ENCODE measurements at regions of chr9 and their contacts with region 1.

Region 1: GRCh38 chr9:77020438-77021290 is 1.2 kb downstream of the FOXB2 start:
- DNase-seq: no peak
- ATAC-seq: no peak
- H3K4me3 ChIP-seq: no peak overlapping the region
- H3K27ac ChIP-seq: no peak overlapping the region
- H3K4me1 ChIP-seq: no peaks in the 10 kb centered on the region
- H3K27me3 ChIP-seq: no peaks in the 10 kb centered on the region; the same call in 1 of the 2 replicates
- CTCF ChIP-seq: no peak

Region 2: DNA sequence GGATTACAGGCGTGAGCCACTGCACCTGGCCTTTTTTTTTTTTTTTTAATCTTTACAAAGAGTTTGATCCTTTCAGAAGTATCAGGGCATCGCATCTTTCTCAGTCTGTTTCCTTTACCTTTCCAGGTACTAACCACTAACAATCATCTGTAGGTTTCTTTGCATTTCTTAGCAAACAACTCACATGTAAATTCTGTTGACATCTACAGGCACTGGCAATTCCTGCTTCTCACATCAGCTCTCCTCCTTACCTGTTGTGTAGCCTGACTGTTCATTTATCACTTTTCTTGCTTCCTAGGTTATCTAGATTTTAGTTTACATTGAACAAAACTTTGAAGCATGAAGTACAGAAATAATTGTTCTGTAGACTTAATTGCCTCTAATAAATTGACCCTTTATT is 129.2 kb after region 1 on chr9:
- CTCF ChIA-PET with region 1: interaction called, 4 read pairs
- POLR2A ChIA-PET with region 1: no interaction called
- in situ Hi-C with region 1: no loop called
- intact Hi-C with region 1: loop called (anchors 5 kb)
- DNase-seq: no peak
- ATAC-seq: no peak
- H3K4me3 ChIP-seq: no peak overlapping the region
- H3K27ac ChIP-seq: no peak overlapping the region
- H3K4me1 ChIP-seq: no peaks in the 10 kb centered on the region
- H3K27me3 ChIP-seq: no peaks in the 10 kb centered on the region
- CTCF ChIP-seq: no peak

Measured in Panc1 (cell line).